Calu3 (cell line): ENCODE measurements at regions of chr5 and their contacts with region 1.

Region 1: DNA sequence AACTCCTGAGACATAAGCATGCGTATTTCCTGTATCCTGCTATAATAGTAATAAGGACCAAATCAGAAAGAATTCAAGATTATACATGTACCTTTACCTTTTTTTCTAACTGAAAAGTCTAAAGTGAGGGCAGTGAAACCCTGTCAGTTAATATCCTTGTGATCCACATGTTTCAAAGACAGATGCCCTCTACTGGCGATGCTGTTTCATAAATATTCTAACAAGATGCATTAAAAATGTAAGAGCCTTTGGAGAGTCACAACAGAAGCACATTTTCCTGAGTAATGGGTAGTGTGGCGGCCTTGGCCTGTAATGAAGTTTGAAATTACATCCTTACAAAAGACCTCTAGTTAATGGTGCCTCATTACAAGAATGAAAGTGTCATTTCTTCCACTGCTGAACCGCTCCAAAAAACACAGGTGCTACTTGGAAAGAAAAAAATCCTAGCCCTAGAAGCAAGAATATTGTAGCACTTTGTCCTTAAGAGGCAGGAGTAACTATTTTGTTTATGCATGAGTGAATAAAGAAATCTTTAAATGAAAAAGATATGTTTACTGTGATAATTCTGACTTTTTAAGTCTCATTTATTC is 232.6 kb downstream of the EPB41L4A start:
- DNase-seq: peak; percentile 43
- H3K4me3 Mint-ChIP-seq: no peak overlapping the region
- H3K27ac Mint-ChIP-seq: no peak overlapping the region
- H3K4me1 Mint-ChIP-seq: peaks cover 12% of the 10 kb centered on the region
- H3K27me3 Mint-ChIP-seq: no peaks in the 10 kb centered on the region
- CTCF ChIP-seq: peak; percentile 54

Region 2: GRCh38 chr5:111834926-111835598 is 351.4 kb before region 1 on chr5:
- CTCF ChIA-PET with region 1: no interaction called
- intact Hi-C with region 1: no loop called
- DNase-seq: no peak
- H3K4me3 Mint-ChIP-seq: no peak overlapping the region
- H3K27ac Mint-ChIP-seq: no peak overlapping the region
- H3K4me1 Mint-ChIP-seq: peaks cover 10% of the 10 kb centered on the region
- H3K27me3 Mint-ChIP-seq: no peaks in the 10 kb centered on the region
- CTCF ChIP-seq: no peak

Region 3: DNA sequence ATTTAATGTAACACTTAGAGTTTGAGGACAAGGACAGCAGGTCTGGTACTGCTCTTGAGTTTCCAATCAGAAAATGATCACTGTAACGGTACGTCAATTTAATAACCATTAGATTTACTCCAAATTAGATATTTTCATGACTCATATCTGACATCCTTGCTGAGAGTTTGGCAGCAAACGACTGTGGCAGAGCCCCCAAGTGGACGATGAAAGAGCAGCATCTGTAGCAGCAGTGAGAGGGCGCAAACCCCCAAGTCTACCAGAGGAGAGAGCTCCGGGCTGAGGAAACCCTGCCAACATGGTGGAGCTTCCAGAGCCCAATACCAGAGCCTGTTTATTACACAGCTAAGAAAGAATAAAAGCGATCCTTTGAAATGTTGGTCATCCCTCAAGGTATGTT is 305.8 kb after region 1 on chr5:
- CTCF ChIA-PET with region 1: interaction called, 4 read pairs
- intact Hi-C with region 1: loop called (anchors 10 kb)
- DNase-seq: peak; percentile 77
- H3K4me3 Mint-ChIP-seq: no peak overlapping the region
- H3K27ac Mint-ChIP-seq: no peak overlapping the region
- H3K4me1 Mint-ChIP-seq: no peaks in the 10 kb centered on the region
- H3K27me3 Mint-ChIP-seq: no peaks in the 10 kb centered on the region
- CTCF ChIP-seq: peak; percentile 84